A673 (cell line): ENCODE measurements at regions of chr1 and their contacts with region 1.

Region 1: DNA sequence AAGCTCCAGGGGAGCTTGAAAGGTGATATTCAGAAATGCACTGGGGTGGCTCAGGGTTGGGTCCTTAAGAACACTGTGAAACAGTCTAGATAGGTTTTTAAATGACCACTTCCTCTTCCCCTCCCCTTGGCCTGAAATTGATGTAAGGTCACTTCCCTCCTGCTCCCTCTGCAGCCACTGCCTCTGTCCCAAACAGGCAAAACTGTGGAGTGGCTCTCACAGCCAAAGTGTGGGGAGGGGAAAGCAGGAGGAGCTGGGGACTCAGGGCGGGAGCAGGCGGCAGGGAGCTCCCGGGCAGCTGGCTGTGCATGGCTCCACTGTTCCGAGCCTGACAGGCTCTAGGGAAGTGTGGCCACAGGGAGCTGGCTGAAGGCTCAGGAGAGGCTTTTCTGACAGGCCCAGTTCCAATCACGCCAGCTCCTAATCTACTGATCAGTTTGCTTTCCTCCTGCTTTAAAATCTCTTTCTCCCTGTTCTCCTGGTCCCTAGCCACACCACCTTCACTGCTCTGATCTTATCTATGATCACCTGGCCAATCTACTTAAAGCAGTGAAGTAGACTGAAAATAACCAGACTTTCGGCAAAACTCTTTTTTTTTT is 5.1 kb upstream of the CSRP1 start:
- DNase-seq: peak; percentile 64
- H3K4me3 ChIP-seq: no peak overlapping the region
- H3K27ac ChIP-seq: peak overlapping the region; percentile 43
- H3K4me1 ChIP-seq: peaks cover 60% of the 10 kb centered on the region
- H3K27me3 ChIP-seq: no peaks in the 10 kb centered on the region
- CTCF ChIP-seq: no peak

Region 2: GRCh38 chr1:201282931-201283829 is 228.9 kb before region 1 on chr1 and contains the start of gene PKP1:
- CTCF ChIA-PET with region 1: no interaction called
- POLR2A ChIA-PET with region 1: no interaction called
- intact Hi-C with region 1: no loop called
- DNase-seq: peak; percentile 98
- H3K4me3 ChIP-seq: peak within 1 kb of the TSS; percentile 94
- H3K27ac ChIP-seq: peak within 1 kb of the TSS; percentile 96
- H3K4me1 ChIP-seq: peaks cover 46% of the 10 kb centered on the region
- H3K27me3 ChIP-seq: no peaks in the 10 kb centered on the region
- CTCF ChIP-seq: no peak
- total RNA-seq, gene PKP1: 492 and 535 TPM in 2 replicates

Region 3: GRCh38 chr1:201436393-201436792 is 75.6 kb before region 1 on chr1:
- CTCF ChIA-PET with region 1: interaction called, 18 read pairs
- POLR2A ChIA-PET with region 1: no interaction called
- intact Hi-C with region 1: loop called (anchors 2 kb)
- DNase-seq: peak; percentile 56
- H3K4me3 ChIP-seq: no peak overlapping the region
- H3K27ac ChIP-seq: no peak overlapping the region
- H3K4me1 ChIP-seq: peaks cover 10% of the 10 kb centered on the region
- H3K27me3 ChIP-seq: no peaks in the 10 kb centered on the region
- CTCF ChIP-seq: no peak; the same call in 1 of the 2 replicates

Region 4: DNA sequence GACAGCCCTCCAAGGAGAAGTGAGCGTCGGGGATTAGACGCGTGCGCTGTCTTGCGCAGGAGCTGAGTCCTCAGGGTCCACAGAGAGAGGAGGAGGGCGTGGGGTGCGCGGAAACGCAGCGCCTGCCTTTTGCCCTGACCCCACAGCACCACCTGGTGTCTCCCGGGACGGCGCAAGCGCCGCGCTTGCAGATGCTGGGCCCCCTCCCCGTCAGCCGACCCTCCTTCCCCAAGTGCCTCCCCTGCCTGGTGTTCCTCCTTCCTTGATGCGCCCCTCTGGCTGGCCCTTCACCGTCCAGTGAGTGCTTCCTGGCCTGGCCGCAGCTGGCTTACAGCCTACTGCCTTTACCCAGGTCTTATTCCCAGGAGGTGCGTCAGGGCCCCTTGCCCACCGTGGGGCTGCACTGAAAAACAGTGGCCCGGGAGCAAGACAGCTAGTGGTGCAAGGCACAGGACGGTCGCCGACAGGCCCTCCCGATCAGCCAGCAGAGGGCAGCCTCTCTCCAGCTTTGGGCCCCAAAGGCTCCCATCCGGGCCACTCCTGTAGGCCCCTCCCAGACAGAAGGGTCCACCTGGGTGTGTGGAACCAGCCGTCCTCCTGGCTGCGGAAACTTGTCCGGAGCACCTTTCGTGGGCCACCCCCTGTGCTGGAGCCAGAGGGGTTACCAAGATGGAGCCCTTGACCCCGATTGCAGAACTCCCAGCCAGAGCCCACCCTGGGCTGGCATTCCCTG is 30.1 kb before region 1 on chr1:
- CTCF ChIA-PET with region 1: interaction called, 79 read pairs
- POLR2A ChIA-PET with region 1: no interaction called
- intact Hi-C with region 1: loop called (anchors 1 kb)
- DNase-seq: peak; percentile 89
- H3K4me3 ChIP-seq: peak overlapping the region; percentile 27
- H3K27ac ChIP-seq: peak overlapping the region; percentile 43
- H3K4me1 ChIP-seq: peaks cover 45% of the 10 kb centered on the region
- H3K27me3 ChIP-seq: no peaks in the 10 kb centered on the region
- CTCF ChIP-seq: peak; percentile 95

Region 5: GRCh38 chr1:201530741-201531531 is 18.9 kb after region 1 on chr1:
- CTCF ChIA-PET with region 1: interaction called, 17 read pairs
- POLR2A ChIA-PET with region 1: interaction called, 3 read pairs
- intact Hi-C with region 1: no loop called
- DNase-seq: peak; percentile 91
- H3K4me3 ChIP-seq: no peak overlapping the region
- H3K27ac ChIP-seq: no peak overlapping the region
- H3K4me1 ChIP-seq: peaks cover 33% of the 10 kb centered on the region
- H3K27me3 ChIP-seq: no peaks in the 10 kb centered on the region
- CTCF ChIP-seq: peak; percentile 94

Region 6: DNA sequence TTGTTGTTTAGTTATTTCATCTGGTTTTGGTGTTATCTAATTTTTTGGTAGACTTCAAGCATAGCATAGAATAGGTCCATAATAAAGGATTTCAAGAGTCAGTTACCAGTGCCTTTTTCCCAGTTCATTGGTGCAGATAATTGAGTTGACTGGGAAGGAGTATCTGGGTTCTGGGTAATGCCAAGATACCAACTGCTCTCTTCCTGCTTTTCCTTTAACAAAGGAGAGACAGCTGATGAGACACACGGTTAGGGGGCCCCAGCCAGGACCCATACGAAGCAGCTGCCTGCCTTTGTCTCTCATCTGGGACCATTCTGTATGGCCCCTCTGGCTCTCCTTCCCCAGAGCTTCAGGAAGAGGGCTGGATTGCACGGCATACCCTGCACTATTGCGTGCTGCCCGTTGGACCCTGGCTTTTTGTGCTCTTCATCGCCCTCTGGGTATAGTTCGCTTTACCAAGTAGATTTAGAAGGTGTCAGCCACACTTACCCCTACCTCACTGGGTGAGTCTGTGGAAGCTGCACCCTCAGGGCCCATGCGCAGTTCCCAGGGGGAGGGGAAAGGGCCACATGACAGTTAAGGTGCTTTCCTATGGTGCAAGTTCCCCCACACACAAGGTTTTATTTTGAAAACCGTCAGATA is 33.9 kb after region 1 on chr1:
- CTCF ChIA-PET with region 1: no interaction called
- POLR2A ChIA-PET with region 1: no interaction called
- intact Hi-C with region 1: no loop called
- DNase-seq: peak; percentile 58
- H3K4me3 ChIP-seq: no peak overlapping the region
- H3K27ac ChIP-seq: no peak overlapping the region
- H3K4me1 ChIP-seq: peaks cover 38% of the 10 kb centered on the region
- H3K27me3 ChIP-seq: no peaks in the 10 kb centered on the region
- CTCF ChIP-seq: peak; percentile 47

Region 7: GRCh38 chr1:201714542-201715276 is 202.7 kb after region 1 on chr1:
- CTCF ChIA-PET with region 1: no interaction called
- POLR2A ChIA-PET with region 1: no interaction called
- intact Hi-C with region 1: no loop called
- DNase-seq: peak; percentile 90
- H3K4me3 ChIP-seq: no peak overlapping the region
- H3K27ac ChIP-seq: peak overlapping the region; percentile 59
- H3K4me1 ChIP-seq: peaks cover 60% of the 10 kb centered on the region
- H3K27me3 ChIP-seq: no peaks in the 10 kb centered on the region
- CTCF ChIP-seq: no peak